ENCODE measurements at regions of chr10 and their contacts with region 1.

Region 1: DNA sequence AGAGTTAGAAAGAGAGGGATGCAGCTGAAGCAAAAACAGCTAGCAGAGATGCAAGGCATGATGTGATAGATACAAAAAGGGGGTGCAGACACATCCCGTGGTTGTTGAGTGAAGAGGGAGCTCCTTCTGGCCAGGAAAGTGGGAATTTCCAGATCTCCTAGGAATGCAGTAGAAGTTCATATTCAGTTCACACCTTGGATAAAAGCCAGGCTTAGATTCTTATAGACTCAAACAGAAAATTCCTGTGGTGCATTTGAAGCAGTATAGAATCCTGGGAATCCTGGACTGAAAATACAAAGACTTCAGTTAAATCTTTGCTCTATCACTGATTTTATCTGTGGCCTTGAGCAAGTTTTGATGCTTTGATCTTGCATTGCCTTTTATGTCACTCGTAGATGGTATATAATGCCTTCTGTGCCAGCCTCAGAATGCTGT is 33.9 kb downstream of the SGPL1 start:
- DNase-seq: no peak
- H3K4me3 Mint-ChIP-seq: no peak overlapping the region
- H3K27ac Mint-ChIP-seq: peak overlapping the region; percentile 13
- H3K4me1 Mint-ChIP-seq: peaks cover 40% of the 10 kb centered on the region
- H3K27me3 Mint-ChIP-seq: no peaks in the 10 kb centered on the region

Region 2: GRCh38 chr10:70803775-70804420 is 45.7 kb before region 1 on chr10:
- intact Hi-C with region 1: no loop called
- DNase-seq: no peak
- H3K4me3 Mint-ChIP-seq: no peak overlapping the region
- H3K27ac Mint-ChIP-seq: no peak overlapping the region
- H3K4me1 Mint-ChIP-seq: peaks cover 2% of the 10 kb centered on the region
- H3K27me3 Mint-ChIP-seq: peaks cover 29% of the 10 kb centered on the region

Region 3: DNA sequence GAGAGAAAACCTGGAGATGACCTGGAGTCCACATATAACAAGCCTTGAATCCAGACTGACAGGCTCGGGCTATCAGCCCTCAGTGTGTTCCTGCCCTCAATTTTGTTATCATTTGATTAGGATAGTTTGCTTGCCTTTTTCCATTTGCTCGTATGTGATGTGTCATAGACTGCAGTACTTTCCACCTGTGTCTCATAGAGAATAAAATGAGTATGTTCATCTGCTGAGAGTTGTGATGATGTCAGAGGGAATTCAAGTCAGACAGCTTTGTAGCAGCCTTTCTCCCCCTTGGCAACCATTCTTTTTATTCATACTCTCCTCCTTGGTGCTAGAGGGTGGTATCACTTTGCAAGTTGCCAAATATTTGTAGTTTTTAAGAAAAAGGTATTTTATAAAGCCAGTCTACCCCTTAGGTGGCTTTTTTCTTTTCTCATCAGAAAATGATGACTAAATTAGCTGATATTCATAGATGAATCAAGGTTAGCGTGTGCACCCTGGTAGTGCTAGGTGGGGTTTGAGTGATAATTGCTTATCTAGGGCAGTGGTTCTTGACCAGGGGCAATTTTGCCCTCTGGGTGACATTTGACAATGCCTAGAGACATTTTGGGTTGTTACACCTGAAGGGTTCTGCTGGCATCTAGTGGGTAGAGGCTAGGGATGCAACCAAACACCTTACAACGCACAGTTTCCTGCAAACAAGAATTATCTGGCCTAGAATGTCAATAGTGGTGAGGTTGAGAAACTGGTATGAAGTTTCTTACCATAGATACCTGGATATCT is 28.4 kb before region 1 on chr10:
- intact Hi-C with region 1: loop called (anchors 1 kb)
- DNase-seq: no peak
- H3K4me3 Mint-ChIP-seq: peak overlapping the region; percentile 41
- H3K27ac Mint-ChIP-seq: peak overlapping the region; percentile 87
- H3K4me1 Mint-ChIP-seq: peaks cover 49% of the 10 kb centered on the region
- H3K27me3 Mint-ChIP-seq: no peaks in the 10 kb centered on the region

Region 4: DNA sequence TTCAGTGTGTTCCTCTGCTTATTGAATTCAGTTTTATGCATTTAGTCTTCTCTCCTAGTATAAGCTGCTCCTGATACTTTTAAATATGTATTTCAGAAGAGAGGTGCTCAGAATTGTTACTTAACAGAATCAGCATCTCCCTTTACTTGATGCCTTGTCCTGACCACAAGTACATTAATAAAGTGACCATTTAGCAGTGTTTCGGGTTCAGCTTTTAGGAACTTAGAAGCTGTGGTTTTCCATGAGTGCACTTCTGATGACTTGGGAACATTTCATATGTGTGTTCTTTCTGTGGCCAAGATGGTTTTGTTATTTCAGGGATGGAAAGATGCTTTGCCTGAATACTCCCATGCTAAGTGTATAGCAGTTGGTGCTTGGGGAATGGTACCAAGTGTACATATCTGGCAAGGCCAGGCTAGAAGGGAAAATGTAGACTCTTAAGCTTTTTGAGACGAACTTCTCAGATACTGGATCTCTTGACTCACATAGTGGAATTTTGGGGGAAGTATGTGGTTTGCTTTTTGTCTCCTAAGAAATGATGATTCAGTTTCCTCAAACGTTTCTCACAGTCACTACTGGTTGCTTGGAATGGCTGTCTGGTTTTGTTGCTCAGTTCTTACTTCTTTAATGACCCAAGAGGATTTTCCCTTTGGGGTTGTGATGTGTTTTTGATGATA is 16.6 kb before region 1 on chr10:
- intact Hi-C with region 1: loop called (anchors 1 kb)
- DNase-seq: no peak
- H3K4me3 Mint-ChIP-seq: peak overlapping the region; percentile 47
- H3K27ac Mint-ChIP-seq: peak overlapping the region; percentile 87
- H3K4me1 Mint-ChIP-seq: peaks cover 66% of the 10 kb centered on the region
- H3K27me3 Mint-ChIP-seq: no peaks in the 10 kb centered on the region

Region 5: DNA sequence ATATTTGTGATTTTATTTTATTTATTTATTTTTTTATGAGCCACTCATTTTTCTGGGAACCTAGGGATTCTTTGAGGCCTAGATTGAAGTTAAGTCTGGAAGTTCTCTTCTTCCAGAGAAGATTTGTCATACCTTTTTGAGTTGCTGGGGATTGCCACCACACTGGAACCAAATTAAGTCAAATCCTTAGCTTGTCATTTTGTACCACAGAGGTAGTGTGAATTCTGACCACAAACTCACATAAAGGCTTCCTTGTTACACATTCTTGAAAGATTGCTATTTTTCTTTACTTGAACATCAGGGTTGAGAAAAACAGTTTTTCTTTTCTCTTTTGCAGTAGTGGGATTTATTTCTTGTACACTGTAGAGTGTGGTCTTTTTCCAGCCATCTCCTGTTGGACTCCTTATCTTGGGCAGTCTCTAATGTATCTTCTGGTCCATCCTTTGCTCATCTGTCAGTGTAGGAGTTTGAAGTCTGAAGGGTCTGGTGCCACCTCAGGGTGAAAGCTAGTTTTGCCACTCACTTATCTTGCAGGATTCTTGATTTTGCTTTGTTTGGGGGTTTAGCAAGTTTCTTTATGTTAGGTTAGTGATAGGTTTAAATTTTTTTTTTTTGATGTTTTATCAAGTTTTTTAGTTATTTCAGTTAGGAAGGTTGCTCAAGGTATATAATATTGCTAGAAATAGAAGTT is 14.0 kb after region 1 on chr10:
- intact Hi-C with region 1: loop called (anchors 2 kb)
- DNase-seq: no peak
- H3K4me3 Mint-ChIP-seq: no peak overlapping the region
- H3K27ac Mint-ChIP-seq: peak overlapping the region; percentile 62
- H3K4me1 Mint-ChIP-seq: peaks cover 30% of the 10 kb centered on the region
- H3K27me3 Mint-ChIP-seq: no peaks in the 10 kb centered on the region

Region 6: DNA sequence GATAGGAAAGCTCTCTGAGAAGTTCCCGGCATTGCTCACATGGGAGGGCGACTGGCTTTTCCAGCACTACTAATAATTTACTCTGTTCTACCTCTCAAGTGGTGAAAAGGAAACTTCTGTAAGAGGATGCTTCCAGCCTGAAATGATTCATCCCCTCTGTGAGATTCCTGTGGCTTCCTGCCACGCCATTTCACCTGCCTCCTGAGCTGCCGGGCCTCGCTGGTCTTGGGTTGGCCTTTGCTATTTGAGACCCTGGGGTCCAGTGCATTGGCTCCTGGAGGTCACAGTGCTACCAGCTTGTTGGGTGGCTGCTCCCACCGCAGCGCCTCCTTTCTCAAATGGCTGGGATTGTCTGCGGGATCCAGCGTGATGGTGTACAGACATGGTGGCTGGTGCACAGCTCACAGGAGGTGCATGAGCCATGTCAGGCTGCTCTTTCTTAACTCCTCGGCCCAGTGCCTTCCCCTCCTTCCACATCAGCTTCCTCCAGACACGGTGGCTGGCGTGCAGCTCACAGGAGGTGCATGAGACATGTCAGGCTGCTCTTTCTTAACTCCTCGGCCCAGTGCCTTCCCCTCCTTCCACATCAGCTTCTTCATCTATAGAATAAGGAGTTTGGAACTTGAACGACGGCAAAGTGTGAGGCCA is 81.7 kb after region 1 on chr10:
- intact Hi-C with region 1: no loop called
- DNase-seq: no peak
- H3K4me3 Mint-ChIP-seq: no peak overlapping the region
- H3K27ac Mint-ChIP-seq: no peak overlapping the region
- H3K4me1 Mint-ChIP-seq: no peaks in the 10 kb centered on the region
- H3K27me3 Mint-ChIP-seq: no peaks in the 10 kb centered on the region

Region 7: DNA sequence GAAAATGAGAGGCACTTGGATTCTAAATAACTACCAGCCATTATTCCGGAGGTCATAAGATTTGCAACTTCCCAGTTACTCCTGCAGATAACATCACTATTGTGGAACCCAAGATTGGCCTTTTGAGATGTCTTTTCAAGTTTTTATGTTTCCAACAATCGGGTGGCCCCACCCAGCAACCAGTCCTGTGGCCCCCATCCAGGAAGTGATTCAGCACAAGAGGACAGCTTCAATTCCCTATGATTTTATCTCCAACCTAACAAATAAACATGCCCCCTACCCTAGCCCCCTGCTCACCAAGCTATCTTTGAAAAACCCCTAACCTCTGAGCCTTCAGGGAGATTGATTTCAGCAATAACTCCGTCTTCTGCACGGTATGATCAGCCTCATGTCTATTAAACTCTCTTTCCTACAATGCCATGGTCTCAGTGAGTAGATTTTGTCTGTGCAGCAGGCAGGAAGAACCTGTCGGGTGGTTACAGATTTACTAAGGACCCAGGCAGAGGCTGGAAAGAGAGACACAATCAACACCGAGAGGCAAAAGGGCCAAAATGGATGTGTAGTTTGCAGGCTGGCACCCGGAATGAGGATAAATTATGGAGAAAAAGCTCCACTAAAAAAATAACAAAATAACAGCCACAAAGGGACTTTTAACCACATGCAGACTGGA is 278.8 kb after region 1 on chr10:
- intact Hi-C with region 1: no loop called
- DNase-seq: no peak
- H3K4me3 Mint-ChIP-seq: no peak overlapping the region
- H3K27ac Mint-ChIP-seq: no peak overlapping the region
- H3K4me1 Mint-ChIP-seq: peaks cover 6% of the 10 kb centered on the region
- H3K27me3 Mint-ChIP-seq: peaks cover 21% of the 10 kb centered on the region

Region 8: DNA sequence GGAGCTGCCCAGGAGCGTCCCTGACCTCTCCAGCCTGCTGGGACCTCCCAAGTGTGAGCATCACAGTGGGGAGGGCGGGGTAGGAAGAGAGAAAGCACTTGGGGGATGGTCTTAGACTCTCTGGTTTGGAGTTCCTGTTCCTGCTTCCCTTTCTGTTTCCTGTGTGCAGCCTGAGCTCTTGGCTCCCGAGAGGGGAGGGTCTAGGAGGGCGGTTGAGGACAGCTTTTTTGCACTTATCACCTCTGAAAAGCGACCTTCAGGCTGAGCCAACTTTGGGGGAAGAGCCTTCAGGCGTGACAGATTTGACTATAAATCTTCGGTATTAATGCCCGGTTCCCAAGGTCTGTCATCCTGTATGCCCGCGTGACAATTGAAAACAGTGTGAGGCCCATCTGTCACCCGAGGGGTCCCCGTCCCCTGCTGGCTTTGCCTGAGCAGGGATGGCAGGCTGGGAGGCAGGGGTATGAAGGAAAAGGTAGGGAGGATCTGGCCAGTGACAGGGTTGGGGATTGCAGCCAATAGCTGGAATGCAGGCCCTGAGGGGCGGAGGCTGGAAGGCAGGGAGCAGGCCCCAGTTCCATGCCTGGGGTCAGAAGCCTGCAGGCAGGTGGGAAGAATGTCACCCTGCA is 625.8 kb after region 1 on chr10:
- intact Hi-C with region 1: no loop called
- DNase-seq: no peak
- H3K4me3 Mint-ChIP-seq: no peak overlapping the region
- H3K27ac Mint-ChIP-seq: no peak overlapping the region
- H3K4me1 Mint-ChIP-seq: peaks cover 2% of the 10 kb centered on the region
- H3K27me3 Mint-ChIP-seq: peaks cover 2% of the 10 kb centered on the region